ENCODE measurements at regions of chr4 and their contacts with region 1.

Region 1: GRCh38 chr4:169659716-169660670 is 39.6 kb downstream of the CLCN3 start:
- DNase-seq: peak; percentile 71
- ATAC-seq: peak; percentile 98

Region 2: GRCh38 chr4:169540774-169541173 is 119.2 kb before region 1 on chr4:
- intact Hi-C with region 1: no loop called
- DNase-seq: no peak
- ATAC-seq: no peak

Region 3: GRCh38 chr4:169619959-169620879 is 39.8 kb before region 1 on chr4 and contains the start of gene CLCN3:
- intact Hi-C with region 1: loop called (anchors 1 kb)
- DNase-seq: peak; percentile 99
- ATAC-seq: peak; percentile 99
- total RNA-seq, gene CLCN3: 58.3 TPM

Measured in Right ventricle myocardium inferior (tissue), 1 donor.